ENCODE measurements at regions of chr7 and their contacts with region 1.

Region 1: DNA sequence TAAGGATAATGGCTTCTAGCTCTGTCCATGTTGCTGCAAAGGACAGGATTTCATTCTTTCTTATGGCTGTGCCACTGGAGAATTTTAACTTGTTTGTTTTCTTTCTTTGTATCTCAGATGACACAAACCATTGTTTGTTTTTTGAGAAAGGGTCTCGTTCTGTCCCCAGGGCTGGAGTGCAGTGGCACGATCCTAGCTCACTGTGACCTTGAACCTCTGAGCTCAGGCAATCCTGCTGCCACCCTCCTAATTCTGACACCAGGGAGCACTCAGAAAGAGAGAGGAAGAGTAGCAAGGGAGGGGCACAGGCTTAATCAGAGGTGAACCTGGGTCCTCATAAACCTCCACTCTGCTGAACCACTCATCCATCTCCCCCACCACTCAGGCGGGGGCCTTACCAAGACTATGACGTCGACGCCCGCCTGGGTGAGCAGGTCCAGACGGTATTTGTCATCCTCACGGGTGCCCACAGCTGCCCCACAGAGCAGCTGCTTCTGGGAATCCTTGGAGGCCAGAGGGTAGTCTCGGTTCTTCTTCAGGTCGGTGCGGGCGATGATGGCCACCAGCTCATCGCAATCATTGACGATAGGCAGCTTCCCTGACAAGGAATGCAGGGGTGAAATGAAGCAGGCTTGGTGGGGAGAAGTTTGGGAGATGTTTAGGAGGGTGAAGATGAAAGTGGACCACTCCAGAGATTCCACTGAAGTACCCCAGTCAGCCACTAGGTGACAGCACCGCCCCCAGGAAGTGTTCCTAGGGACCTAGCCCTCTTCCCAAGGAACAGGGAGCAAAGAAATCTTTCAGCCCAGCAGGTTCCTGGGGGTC is 11.6 kb downstream of the IMPDH1 start:
- H3K4me3 ChIP-seq: no peak overlapping the region
- H3K27ac ChIP-seq: no peak overlapping the region
- H3K4me1 ChIP-seq: no peaks in the 10 kb centered on the region
- CTCF ChIP-seq: peak; percentile 73

Region 2: DNA sequence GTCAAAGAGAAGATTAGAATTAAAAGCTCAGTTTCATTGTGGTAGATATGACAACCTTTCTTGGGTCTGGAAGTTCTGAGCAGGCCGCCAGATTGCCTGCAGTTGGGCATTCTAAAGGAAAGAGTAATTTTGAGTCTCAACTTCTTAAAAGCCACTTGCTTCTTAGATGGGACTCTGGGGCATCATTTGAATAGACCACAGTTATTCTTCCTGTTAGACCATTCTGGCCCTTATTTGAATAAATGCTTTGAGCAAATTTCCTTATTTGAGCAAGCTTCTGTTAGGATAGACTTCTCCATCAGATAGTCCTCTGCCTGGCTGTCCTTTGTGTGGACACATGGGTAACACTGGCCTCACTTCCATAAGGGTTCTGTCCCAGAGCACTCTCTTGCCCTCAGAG is 706.0 kb before region 1 on chr7:
- CTCF ChIA-PET with region 1: no interaction called
- POLR2A ChIA-PET with region 1: no interaction called
- H3K4me3 ChIP-seq: no peak overlapping the region
- H3K27ac ChIP-seq: no peak overlapping the region
- H3K4me1 ChIP-seq: no peaks in the 10 kb centered on the region
- CTCF ChIP-seq: no peak

Region 3: DNA sequence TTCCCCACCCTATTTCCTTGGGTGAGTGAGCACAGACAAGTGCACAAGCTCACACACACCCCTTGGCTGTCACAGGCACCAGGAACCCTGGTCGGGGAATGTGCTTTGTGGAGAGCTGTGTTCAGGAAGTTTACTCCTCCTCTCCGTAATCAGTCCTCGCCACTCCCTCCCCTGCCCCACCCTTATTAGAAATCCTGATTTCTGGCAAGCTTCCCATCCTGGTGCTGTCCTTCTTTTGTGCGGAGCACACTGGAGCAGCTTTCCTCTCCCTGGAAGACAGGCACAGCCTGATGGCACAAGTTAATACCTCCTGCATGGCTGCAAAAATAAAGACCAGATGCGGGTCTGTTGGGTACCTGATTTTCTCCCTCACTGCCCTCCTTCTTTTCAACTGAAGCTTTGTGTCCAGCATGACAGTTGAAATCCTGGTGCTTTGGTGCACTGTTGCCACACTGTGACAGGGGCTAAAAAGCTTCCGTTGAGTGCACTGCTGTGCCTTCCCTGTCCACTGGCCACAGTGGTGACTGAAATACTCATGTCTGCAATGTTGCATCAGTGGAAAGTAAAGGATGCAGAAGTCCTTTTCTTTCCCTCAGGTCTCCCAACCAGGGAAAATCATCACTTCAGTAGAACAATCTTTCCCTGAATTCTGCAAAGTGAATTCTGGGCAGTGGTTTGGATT is 422.0 kb before region 1 on chr7:
- CTCF ChIA-PET with region 1: no interaction called
- POLR2A ChIA-PET with region 1: no interaction called
- H3K4me3 ChIP-seq: no peak overlapping the region
- H3K27ac ChIP-seq: no peak overlapping the region
- H3K4me1 ChIP-seq: no peaks in the 10 kb centered on the region
- CTCF ChIP-seq: no peak

Region 4: GRCh38 chr7:128373606-128374005 is 24.6 kb before region 1 on chr7:
- CTCF ChIA-PET with region 1: interaction called, 15 read pairs
- POLR2A ChIA-PET with region 1: no interaction called
- H3K4me3 ChIP-seq: no peak overlapping the region
- H3K27ac ChIP-seq: no peak overlapping the region
- H3K4me1 ChIP-seq: no peaks in the 10 kb centered on the region
- CTCF ChIP-seq: no peak